Left ventricle myocardium inferior (tissue), 1 donor: ENCODE measurements at regions of chr4 and their contacts with region 1.

Region 1: DNA sequence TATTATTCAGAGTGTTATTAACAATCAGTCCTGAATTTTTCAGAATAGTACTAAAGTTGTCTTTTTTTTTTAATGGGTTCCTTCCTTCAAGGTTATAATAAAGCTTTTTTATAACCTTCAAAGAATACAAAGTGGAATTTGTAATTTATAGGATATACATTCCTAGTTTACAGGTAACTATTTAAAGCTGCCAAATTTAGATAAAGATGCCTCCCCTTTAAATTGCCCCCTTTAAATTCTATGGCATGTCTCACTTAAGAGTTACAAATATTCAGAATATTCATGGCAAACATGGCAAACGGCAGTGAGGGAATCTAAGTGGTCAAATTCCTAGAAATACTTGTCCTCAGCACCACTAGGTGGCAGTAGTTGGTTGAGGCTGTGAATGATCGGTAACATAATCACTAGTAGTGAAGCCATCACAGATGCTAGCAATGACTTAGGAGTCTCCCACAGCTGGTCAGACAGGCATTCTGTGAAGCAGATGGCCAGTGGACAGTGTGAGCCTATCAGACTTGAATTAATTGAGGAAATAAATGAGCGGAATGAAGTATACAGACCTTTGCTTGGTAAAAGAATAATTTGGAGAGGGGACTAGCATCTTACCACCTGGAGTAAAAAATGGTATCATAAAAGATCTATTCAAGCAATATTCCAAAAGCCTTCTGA is 86.4 kb downstream of the CBR4 start:
- DNase-seq: no peak
- H3K4me3 ChIP-seq: no peak overlapping the region
- H3K27ac ChIP-seq: no peak overlapping the region
- H3K4me1 ChIP-seq: peaks cover 14% of the 10 kb centered on the region
- H3K27me3 ChIP-seq: no peaks in the 10 kb centered on the region
- CTCF ChIP-seq: peak; percentile 82

Region 2: DNA sequence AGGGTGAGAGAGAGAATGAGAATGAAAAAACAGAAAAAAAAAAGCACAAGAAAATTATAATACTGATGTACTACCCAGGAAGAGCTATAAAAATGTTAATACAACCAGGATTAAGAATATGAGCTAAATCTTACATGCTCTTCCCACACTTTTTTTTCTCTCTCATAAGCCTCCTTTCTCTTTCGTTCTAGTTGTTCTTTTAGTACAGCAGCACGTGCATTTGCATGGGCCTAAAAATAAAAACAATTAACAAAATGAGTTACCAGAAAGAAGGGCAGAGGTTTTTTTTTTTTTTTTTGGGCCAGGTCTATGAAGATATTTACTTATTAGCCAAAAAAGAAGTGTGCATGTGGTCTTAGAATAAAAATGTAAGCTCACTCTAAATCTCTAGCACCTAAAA is 583.2 kb after region 1 on chr4:
- intact Hi-C with region 1: loop called (anchors 5 kb)
- DNase-seq: no peak
- H3K4me3 ChIP-seq: no peak overlapping the region
- H3K27ac ChIP-seq: no peak overlapping the region
- H3K4me1 ChIP-seq: no peaks in the 10 kb centered on the region
- H3K27me3 ChIP-seq: no peaks in the 10 kb centered on the region
- CTCF ChIP-seq: no peak